ENCODE measurements at regions of chr1 and their contacts with region 1.

Region 1: DNA sequence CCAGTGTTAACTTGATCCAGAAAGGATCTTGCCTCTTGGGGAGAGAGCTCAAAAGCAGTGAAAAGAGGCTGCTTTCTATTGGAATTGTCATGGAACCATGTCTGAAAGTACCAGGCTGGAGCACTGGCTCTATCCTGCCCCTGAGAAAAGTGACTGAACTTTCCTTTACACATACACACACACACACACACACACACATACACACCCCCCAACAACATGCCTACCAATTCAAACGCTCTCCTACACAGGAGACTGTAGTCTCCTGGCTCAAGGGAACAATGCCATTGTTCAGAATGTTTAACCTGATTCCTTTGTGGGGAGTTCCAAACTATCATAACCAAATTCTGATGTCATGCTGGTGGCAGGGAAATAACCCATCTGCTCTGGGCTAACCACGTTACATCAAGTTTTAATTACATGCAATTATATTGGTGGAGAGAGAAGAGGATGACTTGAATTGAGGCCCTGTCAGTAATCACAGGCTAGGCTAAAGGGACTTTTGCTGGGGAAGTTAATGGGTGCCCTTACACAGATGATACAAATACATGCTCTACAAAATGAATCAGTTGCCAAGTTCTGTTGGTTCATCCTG is 52.3 kb upstream of the DUSP10 start:
- DNase-seq: no peak
- ATAC-seq: peak; percentile 80
- H3K4me3 Mint-ChIP-seq: peak overlapping the region; percentile 83
- H3K27ac Mint-ChIP-seq: peak overlapping the region; percentile 97
- H3K4me1 Mint-ChIP-seq: peaks cover 55% of the 10 kb centered on the region
- H3K27me3 Mint-ChIP-seq: no peaks in the 10 kb centered on the region
- CTCF ChIP-seq: no peak

Region 2: DNA sequence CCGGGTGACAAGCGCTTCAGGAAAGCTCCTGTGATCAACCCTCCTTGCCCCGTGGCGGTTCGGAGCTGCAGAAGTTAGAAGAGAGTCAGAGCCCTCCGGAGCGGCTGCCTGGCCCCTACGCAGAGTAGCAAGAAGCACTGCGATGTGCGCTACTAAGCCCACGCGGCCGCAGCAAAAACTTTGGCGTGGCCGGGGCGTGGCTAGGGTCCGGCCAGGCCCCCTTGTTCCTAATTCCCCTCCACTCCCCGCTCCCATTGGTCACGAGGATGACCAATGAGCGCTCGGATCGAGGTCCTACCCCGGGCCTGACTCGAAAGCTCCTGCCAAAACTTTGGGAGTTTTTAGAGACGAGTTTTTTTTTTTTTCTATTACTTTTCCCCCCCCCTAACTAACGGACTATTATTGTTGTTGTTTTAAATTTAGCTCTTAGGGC is 915.1 kb before region 1 on chr1 and contains the start of gene HLX:
- CTCF ChIA-PET with region 1: no interaction called
- POLR2A ChIA-PET with region 1: no interaction called
- intact Hi-C with region 1: loop called (anchors 5 kb)
- DNase-seq: peak; percentile 75
- ATAC-seq: peak; percentile 80
- H3K4me3 Mint-ChIP-seq: peak within 1 kb of the TSS; percentile 94
- H3K27ac Mint-ChIP-seq: peak within 1 kb of the TSS; percentile 93
- H3K4me1 Mint-ChIP-seq: peaks cover 50% of the 10 kb centered on the region
- H3K27me3 Mint-ChIP-seq: peaks cover 2% of the 10 kb centered on the region
- CTCF ChIP-seq: no peak
- total RNA-seq, gene HLX: 3.2 and 4.6 TPM in 2 replicates

Region 3: DNA sequence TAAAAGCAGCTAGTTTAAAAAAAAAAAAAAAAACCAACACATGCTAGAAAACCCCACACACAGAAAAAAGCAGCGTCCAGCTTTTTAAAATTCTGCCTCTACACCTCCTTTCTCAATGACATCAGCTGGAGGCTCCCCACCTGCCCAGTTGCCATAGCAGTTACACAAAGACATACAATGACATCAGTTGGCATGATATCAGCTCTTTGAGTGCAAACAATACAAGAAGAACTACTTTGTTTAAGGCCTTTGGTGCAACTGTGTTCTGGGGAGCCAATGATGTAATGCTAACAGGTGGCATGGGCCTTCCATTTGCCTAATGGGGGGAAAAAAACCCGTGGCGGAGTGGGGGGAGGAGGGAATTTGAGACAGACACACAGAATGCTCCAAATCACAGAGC is 85.2 kb before region 1 on chr1:
- CTCF ChIA-PET with region 1: no interaction called
- POLR2A ChIA-PET with region 1: interaction called, 8 read pairs
- intact Hi-C with region 1: loop called (anchors 1 kb)
- DNase-seq: peak; percentile 20
- ATAC-seq: peak; percentile 32
- H3K4me3 Mint-ChIP-seq: peak overlapping the region; percentile 37
- H3K27ac Mint-ChIP-seq: peak overlapping the region; percentile 82
- H3K4me1 Mint-ChIP-seq: peaks cover 60% of the 10 kb centered on the region
- H3K27me3 Mint-ChIP-seq: no peaks in the 10 kb centered on the region
- CTCF ChIP-seq: no peak

Region 4: GRCh38 chr1:221783936-221784335 is 10.2 kb before region 1 on chr1:
- CTCF ChIA-PET with region 1: interaction called, 3 read pairs
- POLR2A ChIA-PET with region 1: interaction called, 80 read pairs
- intact Hi-C with region 1: loop called (anchors 1 kb)
- DNase-seq: no peak
- ATAC-seq: peak; percentile 87
- H3K4me3 Mint-ChIP-seq: no peak overlapping the region
- H3K27ac Mint-ChIP-seq: no peak overlapping the region
- H3K4me1 Mint-ChIP-seq: peaks cover 51% of the 10 kb centered on the region
- H3K27me3 Mint-ChIP-seq: no peaks in the 10 kb centered on the region
- CTCF ChIP-seq: no peak

Region 5: DNA sequence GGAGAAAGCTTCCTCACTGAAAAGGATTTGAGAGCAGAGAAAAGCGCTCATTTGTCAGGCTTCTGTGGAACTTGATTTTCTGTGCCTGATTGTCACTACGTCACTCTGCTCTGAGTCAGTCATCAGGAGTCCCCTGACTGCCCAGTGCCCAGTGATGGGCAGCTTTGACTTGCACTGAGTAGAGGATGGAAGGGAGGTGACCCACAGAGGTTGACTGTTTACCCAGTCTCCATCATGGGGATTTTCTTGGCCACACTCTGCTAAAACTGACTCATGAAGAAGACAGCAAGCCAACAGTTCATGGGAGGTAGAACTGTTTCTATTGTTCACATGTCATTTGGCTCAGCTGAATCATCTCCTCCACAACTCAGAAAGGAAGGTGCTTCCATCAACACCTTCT is 29.9 kb after region 1 on chr1:
- CTCF ChIA-PET with region 1: interaction called, 3 read pairs
- POLR2A ChIA-PET with region 1: interaction called, 37 read pairs
- intact Hi-C with region 1: loop called (anchors 1 kb)
- DNase-seq: no peak
- ATAC-seq: peak; percentile 40
- H3K4me3 Mint-ChIP-seq: peak overlapping the region; percentile 58
- H3K27ac Mint-ChIP-seq: peak overlapping the region; percentile 85
- H3K4me1 Mint-ChIP-seq: peaks cover 67% of the 10 kb centered on the region
- H3K27me3 Mint-ChIP-seq: no peaks in the 10 kb centered on the region
- CTCF ChIP-seq: no peak

Region 6: DNA sequence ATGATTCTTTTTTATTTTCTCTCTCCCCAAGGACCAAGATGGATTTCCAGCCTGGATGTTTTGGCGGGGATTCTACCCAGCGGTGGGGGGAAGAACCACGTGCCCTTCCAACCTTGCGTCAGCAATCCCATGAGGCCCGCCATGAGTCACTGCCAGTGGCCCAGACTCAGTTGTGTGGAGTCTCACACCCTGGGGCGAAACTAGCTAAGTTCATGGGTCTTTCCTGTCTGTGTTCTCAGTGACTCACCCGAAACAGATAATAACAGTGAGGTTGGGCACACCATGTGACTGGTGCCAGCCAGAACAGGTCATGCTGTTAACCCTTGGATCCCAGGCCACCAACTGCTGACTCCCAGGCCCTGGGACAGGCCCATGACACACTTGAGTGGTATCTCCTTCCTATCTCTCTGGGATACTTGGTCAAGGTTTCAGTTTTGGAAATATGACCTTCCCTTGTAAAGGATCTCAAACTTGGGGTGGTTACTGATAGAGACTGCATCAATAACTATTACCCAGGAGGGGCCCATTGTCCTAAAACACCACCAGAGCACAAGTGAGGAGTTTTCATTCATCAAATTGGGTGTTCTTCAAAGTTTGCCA is 45.7 kb after region 1 on chr1:
- CTCF ChIA-PET with region 1: interaction called, 3 read pairs
- POLR2A ChIA-PET with region 1: interaction called, 60 read pairs
- intact Hi-C with region 1: loop called (anchors 1 kb)
- DNase-seq: peak; percentile 80
- ATAC-seq: peak; percentile 80
- H3K4me3 Mint-ChIP-seq: peak overlapping the region; percentile 29
- H3K27ac Mint-ChIP-seq: peak overlapping the region; percentile 95
- H3K4me1 Mint-ChIP-seq: peaks cover 50% of the 10 kb centered on the region
- H3K27me3 Mint-ChIP-seq: no peaks in the 10 kb centered on the region
- CTCF ChIP-seq: no peak

Region 7: DNA sequence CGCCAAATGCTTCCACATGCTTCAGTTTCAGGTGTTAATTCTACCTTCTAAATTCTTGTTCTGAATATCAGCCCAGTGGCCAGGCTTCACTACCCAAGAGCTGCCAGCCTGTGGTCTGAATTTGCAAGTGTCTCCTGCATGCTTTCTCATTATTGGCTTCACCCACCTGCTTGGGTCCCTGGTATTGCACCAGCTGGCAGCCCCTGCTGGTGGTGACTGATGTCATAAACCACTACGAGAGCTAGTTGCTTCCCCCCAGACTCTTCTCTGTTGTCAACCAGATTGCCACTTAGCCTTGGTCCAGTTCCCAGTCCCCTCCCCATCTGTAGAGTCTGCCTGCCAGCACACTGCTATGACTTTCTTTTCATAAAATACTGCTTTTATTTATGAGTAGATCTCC is 145.4 kb after region 1 on chr1:
- CTCF ChIA-PET with region 1: no interaction called
- POLR2A ChIA-PET with region 1: interaction called, 5 read pairs
- intact Hi-C with region 1: loop called (anchors 1 kb)
- DNase-seq: peak; percentile 49
- ATAC-seq: peak; percentile 95
- H3K4me3 Mint-ChIP-seq: peak overlapping the region; percentile 66
- H3K27ac Mint-ChIP-seq: peak overlapping the region; percentile 79
- H3K4me1 Mint-ChIP-seq: peaks cover 41% of the 10 kb centered on the region
- H3K27me3 Mint-ChIP-seq: no peaks in the 10 kb centered on the region
- CTCF ChIP-seq: no peak